ENCODE measurements at regions of chr2 and their contacts with region 1.

Region 1: GRCh38 chr2:227228061-227228667 is 63.7 kb downstream of the COL4A3 start:
- DNase-seq: peak; percentile 57 to 76
- H3K4me3 ChIP-seq: peak overlapping the region; percentile 0; the same call in 1 of the 2 replicates
- H3K27ac ChIP-seq: no peak overlapping the region
- H3K4me1 ChIP-seq: peaks cover 18% of the 10 kb centered on the region
- H3K27me3 ChIP-seq: no peaks in the 10 kb centered on the region
- CTCF ChIP-seq: no peak

Region 2: GRCh38 chr2:225598897-225599296 is 1629.3 kb before region 1 on chr2:
- CTCF ChIA-PET with region 1: no interaction called
- POLR2A ChIA-PET with region 1: no interaction called
- intact Hi-C with region 1: no loop called
- DNase-seq: no peak
- H3K4me3 ChIP-seq: no peak overlapping the region
- H3K27ac ChIP-seq: no peak overlapping the region
- H3K4me1 ChIP-seq: no peaks in the 10 kb centered on the region
- H3K27me3 ChIP-seq: no peaks in the 10 kb centered on the region
- CTCF ChIP-seq: no peak

Region 3: DNA sequence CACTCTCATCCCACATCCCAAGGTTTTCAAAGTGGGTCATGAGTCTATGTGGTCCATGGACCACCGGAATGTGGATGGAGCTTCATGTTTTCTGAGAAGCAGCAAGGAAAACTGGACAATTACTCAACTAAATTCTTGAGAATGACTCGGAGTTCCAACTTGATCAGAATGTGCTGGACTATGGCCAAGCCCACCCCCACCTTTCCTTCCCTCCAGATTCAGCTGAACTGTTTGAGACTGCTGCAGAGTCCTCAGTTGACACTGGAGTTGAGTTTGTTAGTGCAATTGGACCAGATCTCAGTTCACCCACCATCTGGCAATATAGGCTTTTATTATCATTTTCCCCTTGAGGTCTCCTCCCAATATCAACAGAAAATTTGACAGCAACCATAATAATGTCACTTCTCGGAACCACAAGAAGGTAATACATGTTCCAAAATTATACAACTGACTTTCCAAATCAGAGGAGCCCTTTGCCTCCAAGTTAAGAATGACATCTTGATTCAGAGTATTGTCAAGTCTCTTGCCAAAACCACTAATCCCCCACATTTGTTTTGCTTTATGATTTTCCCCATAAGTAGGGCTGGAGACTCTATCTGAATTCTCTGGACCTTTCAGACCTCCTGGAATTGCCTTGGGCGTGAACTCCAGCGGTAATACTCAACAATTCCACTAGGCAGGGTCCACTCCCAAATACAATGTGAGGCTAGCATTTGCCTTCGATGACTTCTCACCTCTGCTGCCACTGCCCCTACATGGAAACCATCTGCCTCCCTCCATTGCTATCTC is 73.0 kb before region 1 on chr2:
- CTCF ChIA-PET with region 1: no interaction called
- POLR2A ChIA-PET with region 1: no interaction called
- intact Hi-C with region 1: no loop called
- DNase-seq: no peak
- H3K4me3 ChIP-seq: no peak overlapping the region
- H3K27ac ChIP-seq: no peak overlapping the region
- H3K4me1 ChIP-seq: no peaks in the 10 kb centered on the region
- H3K27me3 ChIP-seq: no peaks in the 10 kb centered on the region
- CTCF ChIP-seq: no peak

Region 4: GRCh38 chr2:227921648-227922047 is 693.5 kb after region 1 on chr2:
- CTCF ChIA-PET with region 1: no interaction called
- POLR2A ChIA-PET with region 1: interaction called, 14 read pairs
- intact Hi-C with region 1: no loop called
- DNase-seq: no peak
- H3K4me3 ChIP-seq: no peak overlapping the region
- H3K27ac ChIP-seq: no peak overlapping the region
- H3K4me1 ChIP-seq: no peaks in the 10 kb centered on the region
- H3K27me3 ChIP-seq: no peaks in the 10 kb centered on the region
- CTCF ChIP-seq: no peak

Measured in PC-9 (cell line).